GM23248 (cell line): ENCODE measurements at regions of chr19 and their contacts with region 1.

Region 1: DNA sequence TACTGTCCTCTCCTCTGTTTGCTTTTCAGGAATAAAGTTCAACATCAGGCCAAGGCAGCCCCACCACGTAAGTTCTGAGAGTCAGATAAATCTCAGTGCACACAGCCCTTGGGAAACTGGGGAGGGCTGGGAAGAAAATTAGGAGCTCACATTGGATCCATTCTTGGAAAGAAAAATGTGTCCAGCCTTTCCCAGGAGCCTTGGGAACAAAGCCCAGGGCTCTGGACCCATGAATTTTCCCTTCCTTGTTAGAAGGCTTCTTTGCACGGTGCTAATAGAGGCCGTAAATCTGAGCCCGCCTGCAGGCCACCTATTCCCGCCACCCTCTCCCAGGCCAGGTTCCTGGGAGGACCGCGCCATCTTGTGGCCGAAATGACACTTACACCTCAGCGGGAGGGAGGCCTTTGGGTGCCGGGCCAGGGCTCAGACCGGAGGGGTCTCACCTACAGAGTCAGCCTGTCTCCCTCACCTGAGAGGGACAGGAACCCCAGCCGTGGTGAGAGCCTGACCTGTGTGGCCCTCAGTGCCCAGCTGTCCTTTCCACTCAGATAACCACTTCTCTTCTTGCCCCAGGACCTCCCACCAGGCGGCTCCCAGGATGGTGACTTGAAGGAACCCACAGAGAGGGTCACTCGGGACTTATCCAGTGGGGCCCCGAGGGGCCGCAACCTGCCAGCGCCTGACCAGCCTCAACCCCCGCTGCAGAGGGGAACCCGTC is 25.1 kb upstream of the KCTD15 start:
- DNase-seq: peak; percentile 73
- H3K4me3 ChIP-seq: no peak overlapping the region
- H3K27ac ChIP-seq: no peak overlapping the region
- H3K4me1 ChIP-seq: no peaks in the 10 kb centered on the region
- H3K27me3 ChIP-seq: 0 out of 2 replicates have a peak, but pooled peaks cover 10% of the 10 kb centered on the region

Region 2: GRCh38 chr19:33419788-33420130 is 351.8 kb before region 1 on chr19:
- in situ Hi-C with region 1: loop called (anchors 5 kb)
- DNase-seq: no peak
- H3K4me3 ChIP-seq: no peak overlapping the region
- H3K27ac ChIP-seq: no peak overlapping the region
- H3K4me1 ChIP-seq: no peaks in the 10 kb centered on the region
- H3K27me3 ChIP-seq: no peaks in the 10 kb centered on the region

Region 3: GRCh38 chr19:33921165-33921564 is 149.6 kb after region 1 on chr19:
- in situ Hi-C with region 1: no loop called
- DNase-seq: no peak
- H3K4me3 ChIP-seq: no peak overlapping the region
- H3K27ac ChIP-seq: no peak overlapping the region
- H3K4me1 ChIP-seq: no peaks in the 10 kb centered on the region
- H3K27me3 ChIP-seq: 0 out of 2 replicates have a peak, but pooled peaks cover 3% of the 10 kb centered on the region